GM23248 (cell line): ENCODE measurements at regions of chr10 and their contacts with region 1.

Region 1: GRCh38 chr10:19788075-19788686 is 28.1 kb upstream of the PLXDC2 start:
- DNase-seq: peak; percentile 69
- H3K4me3 ChIP-seq: no peak overlapping the region
- H3K27ac ChIP-seq: no peak overlapping the region
- H3K4me1 ChIP-seq: no peaks in the 10 kb centered on the region
- H3K27me3 ChIP-seq: no peaks in the 10 kb centered on the region

Region 2: GRCh38 chr10:18689498-18689897 is 1098.7 kb before region 1 on chr10:
- in situ Hi-C with region 1: loop called (anchors 25 kb)
- DNase-seq: peak; percentile 65
- H3K4me3 ChIP-seq: no peak overlapping the region
- H3K27ac ChIP-seq: no peak overlapping the region
- H3K4me1 ChIP-seq: no peaks in the 10 kb centered on the region
- H3K27me3 ChIP-seq: no peaks in the 10 kb centered on the region

Region 3: GRCh38 chr10:19412531-19412930 is 375.6 kb before region 1 on chr10:
- in situ Hi-C with region 1: loop called (anchors 10 kb)
- DNase-seq: peak; percentile 51
- H3K4me3 ChIP-seq: no peak overlapping the region
- H3K27ac ChIP-seq: no peak overlapping the region
- H3K4me1 ChIP-seq: no peaks in the 10 kb centered on the region
- H3K27me3 ChIP-seq: no peaks in the 10 kb centered on the region